ENCODE measurements at regions of chr6 and their contacts with region 1.

Region 1: DNA sequence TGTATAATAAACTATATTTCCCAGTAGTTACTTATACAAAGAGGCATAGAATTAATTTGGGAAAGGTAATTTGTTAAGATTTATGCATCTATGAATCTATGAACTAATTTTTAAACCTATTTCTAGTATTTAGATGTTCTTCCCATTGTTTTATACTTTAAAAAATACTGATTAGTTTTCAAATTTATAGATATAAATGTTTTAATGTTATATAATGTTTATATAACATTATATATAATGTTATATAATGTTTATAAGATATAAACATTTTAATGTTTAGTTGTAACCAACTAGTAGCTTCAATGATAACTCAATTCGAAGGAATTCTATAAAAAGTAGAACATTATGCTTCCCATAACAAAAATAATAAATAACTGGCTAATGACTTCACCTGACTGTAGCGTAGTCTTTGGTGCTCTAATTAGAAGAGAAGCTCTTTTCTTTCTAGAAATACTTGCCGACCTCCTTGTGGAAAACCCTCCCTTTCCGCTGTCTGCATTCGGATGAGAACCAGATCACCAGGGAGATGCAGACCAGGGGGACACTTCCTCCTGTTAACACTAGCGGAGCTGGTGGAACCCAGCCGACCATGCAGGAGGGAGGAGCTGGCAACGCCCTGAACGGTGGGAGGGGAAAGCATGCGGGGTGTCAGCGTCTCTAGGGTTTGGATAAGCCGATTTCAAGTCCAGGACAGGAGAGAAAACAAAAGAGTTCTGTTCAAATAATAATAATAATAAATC is 158.4 kb downstream of the OR2B2 start:
- DNase-seq: peak; percentile 53
- ATAC-seq: peak; percentile 59
- H3K4me3 Mint-ChIP-seq: peak overlapping the region; percentile 96
- H3K27ac Mint-ChIP-seq: peak overlapping the region; percentile 97
- H3K4me1 Mint-ChIP-seq: peaks cover 32% of the 10 kb centered on the region
- H3K27me3 Mint-ChIP-seq: no peaks in the 10 kb centered on the region
- CTCF ChIP-seq: no peak

Region 2: GRCh38 chr6:25992413-25993037 is 1761.3 kb before region 1 on chr6:
- CTCF ChIA-PET with region 1: no interaction called
- POLR2A ChIA-PET with region 1: no interaction called
- intact Hi-C with region 1: loop called (anchors 2 kb)
- DNase-seq: peak; percentile 99
- ATAC-seq: peak; percentile 89
- H3K4me3 Mint-ChIP-seq: peak overlapping the region; percentile 99
- H3K27ac Mint-ChIP-seq: peak overlapping the region; percentile 99
- H3K4me1 Mint-ChIP-seq: peaks cover 50% of the 10 kb centered on the region
- H3K27me3 Mint-ChIP-seq: no peaks in the 10 kb centered on the region
- CTCF ChIP-seq: peak; percentile 73

Region 3: GRCh38 chr6:27126815-27127537 is 626.9 kb before region 1 on chr6:
- CTCF ChIA-PET with region 1: no interaction called
- POLR2A ChIA-PET with region 1: interaction called, 4 read pairs
- intact Hi-C with region 1: loop called (anchors 1 kb)
- DNase-seq: peak; percentile 55
- ATAC-seq: peak; percentile 79
- H3K4me3 Mint-ChIP-seq: peak overlapping the region; percentile 81
- H3K27ac Mint-ChIP-seq: peak overlapping the region; percentile 82
- H3K4me1 Mint-ChIP-seq: peaks cover 14% of the 10 kb centered on the region
- H3K27me3 Mint-ChIP-seq: no peaks in the 10 kb centered on the region
- CTCF ChIP-seq: peak; percentile 54

Region 4: DNA sequence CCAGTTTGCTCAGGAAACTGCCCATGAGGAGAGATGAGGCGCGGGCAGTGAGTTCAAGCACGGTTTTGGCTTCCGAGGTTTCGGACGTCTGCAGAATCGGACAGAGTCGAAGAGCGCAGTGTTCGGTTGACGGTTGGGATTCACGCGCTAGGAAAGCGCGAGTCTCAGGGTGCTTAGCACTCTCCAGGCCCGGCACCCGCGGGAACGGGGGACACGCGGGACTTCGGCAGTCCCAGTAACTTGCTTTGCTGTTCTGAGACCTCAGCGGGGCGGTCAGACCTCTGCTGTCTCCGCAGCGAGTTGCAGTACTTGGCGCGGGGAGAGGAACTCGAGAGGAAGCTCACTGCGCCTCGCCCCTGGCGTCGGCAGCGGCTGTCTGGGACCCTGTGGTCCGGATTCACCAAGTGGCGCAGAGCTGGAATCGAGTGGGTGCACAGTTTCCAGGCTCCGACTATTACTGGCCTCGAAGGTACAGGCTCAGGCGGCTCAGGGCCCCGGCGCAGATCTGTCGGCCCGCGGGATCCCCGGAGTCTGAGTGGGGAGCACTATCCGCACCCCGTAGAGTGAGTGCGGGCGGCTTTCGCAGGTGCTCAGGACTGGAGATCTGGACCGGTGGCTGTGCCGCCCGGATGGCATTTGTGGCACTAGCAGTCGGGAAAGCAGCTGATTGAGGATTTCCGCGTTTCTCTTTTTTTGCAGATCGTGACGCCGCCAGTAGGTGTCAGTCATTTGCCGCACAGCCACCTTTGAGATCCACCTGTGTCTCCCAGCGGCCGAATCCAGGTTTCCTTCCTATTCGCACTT is 441.5 kb before region 1 on chr6 and contains the start of gene POM121L2:
- CTCF ChIA-PET with region 1: interaction called, 11 read pairs
- POLR2A ChIA-PET with region 1: no interaction called
- intact Hi-C with region 1: loop called (anchors 1 kb)
- DNase-seq: peak; percentile 53
- ATAC-seq: peak; percentile 71
- H3K4me3 Mint-ChIP-seq: peak within 1 kb of the TSS; percentile 82
- H3K27ac Mint-ChIP-seq: no peak within 1 kb of the TSS
- H3K4me1 Mint-ChIP-seq: peaks cover 12% of the 10 kb centered on the region
- H3K27me3 Mint-ChIP-seq: peaks cover 66% of the 10 kb centered on the region
- CTCF ChIP-seq: no peak
- total RNA-seq, gene POM121L2: not detected in 2 replicates

Region 5: GRCh38 chr6:27518881-27519795 is 234.7 kb before region 1 on chr6:
- CTCF ChIA-PET with region 1: interaction called, 38 read pairs
- POLR2A ChIA-PET with region 1: interaction called, 3 read pairs
- intact Hi-C with region 1: loop called (anchors 1 kb)
- DNase-seq: peak; percentile 48
- ATAC-seq: peak; percentile 72
- H3K4me3 Mint-ChIP-seq: peak overlapping the region; percentile 83
- H3K27ac Mint-ChIP-seq: peak overlapping the region; percentile 82
- H3K4me1 Mint-ChIP-seq: peaks cover 15% of the 10 kb centered on the region
- H3K27me3 Mint-ChIP-seq: peaks cover 30% of the 10 kb centered on the region
- CTCF ChIP-seq: no peak

Region 6: GRCh38 chr6:27575594-27576361 is 178.1 kb before region 1 on chr6:
- CTCF ChIA-PET with region 1: no interaction called
- POLR2A ChIA-PET with region 1: no interaction called
- intact Hi-C with region 1: no loop called
- DNase-seq: no peak
- ATAC-seq: no peak
- H3K4me3 Mint-ChIP-seq: no peak overlapping the region
- H3K27ac Mint-ChIP-seq: no peak overlapping the region
- H3K4me1 Mint-ChIP-seq: no peaks in the 10 kb centered on the region
- H3K27me3 Mint-ChIP-seq: peaks cover 46% of the 10 kb centered on the region
- CTCF ChIP-seq: no peak

Region 7: DNA sequence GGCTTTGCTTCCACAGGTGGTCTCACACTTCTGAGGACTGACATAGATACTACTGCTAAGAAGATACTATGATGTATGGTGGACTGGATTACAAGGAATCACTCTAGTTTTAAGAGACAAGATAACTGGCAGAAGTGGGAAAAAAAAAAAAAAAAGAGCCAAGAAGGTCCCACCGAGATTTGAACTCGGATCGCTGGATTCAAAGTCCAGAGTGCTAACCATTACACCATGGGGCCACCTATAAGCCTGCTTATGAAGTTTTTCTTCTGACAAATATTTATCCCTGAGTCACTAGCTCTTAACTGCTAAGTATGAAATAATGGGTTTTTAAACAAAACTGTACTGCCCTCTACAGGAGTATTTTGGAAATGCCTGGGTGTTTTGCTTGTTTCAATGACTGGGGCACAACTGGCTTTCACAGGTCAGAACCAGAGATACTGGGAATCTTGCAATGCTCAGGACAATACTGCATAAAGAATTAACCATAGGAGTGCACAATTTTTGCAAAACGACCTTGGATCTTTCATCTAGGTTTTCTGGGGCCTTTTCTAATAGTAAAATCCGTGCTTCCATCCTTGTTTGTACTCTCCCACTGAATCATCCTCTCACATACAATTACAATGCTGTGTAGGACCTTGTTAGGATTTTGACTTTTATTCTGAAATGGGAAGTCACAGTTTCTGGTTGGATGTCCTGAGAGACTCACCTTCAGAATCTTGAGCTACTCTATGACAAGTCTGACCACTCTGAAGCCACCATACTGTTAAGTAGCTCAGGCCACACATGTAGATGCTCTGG is 42.1 kb after region 1 on chr6:
- CTCF ChIA-PET with region 1: interaction called, 17 read pairs
- POLR2A ChIA-PET with region 1: interaction called, 4 read pairs
- intact Hi-C with region 1: no loop called
- DNase-seq: no peak
- ATAC-seq: peak; percentile 60
- H3K4me3 Mint-ChIP-seq: no peak overlapping the region
- H3K27ac Mint-ChIP-seq: peak overlapping the region; percentile 50
- H3K4me1 Mint-ChIP-seq: peaks cover 21% of the 10 kb centered on the region
- H3K27me3 Mint-ChIP-seq: peaks cover 6% of the 10 kb centered on the region
- CTCF ChIP-seq: no peak

Region 8: GRCh38 chr6:28863604-28864320 is 1109.9 kb after region 1 on chr6:
- CTCF ChIA-PET with region 1: no interaction called
- POLR2A ChIA-PET with region 1: no interaction called
- intact Hi-C with region 1: loop called (anchors 10 kb)
- DNase-seq: peak; percentile 54
- ATAC-seq: peak; percentile 30
- H3K4me3 Mint-ChIP-seq: peak overlapping the region; percentile 85
- H3K27ac Mint-ChIP-seq: peak overlapping the region; percentile 90
- H3K4me1 Mint-ChIP-seq: peaks cover 27% of the 10 kb centered on the region
- H3K27me3 Mint-ChIP-seq: peaks cover 4% of the 10 kb centered on the region
- CTCF ChIP-seq: no peak